CD14-positive monocyte (primary cell): ENCODE measurements at regions of chr20 and their contacts with region 1.

Region 1: DNA sequence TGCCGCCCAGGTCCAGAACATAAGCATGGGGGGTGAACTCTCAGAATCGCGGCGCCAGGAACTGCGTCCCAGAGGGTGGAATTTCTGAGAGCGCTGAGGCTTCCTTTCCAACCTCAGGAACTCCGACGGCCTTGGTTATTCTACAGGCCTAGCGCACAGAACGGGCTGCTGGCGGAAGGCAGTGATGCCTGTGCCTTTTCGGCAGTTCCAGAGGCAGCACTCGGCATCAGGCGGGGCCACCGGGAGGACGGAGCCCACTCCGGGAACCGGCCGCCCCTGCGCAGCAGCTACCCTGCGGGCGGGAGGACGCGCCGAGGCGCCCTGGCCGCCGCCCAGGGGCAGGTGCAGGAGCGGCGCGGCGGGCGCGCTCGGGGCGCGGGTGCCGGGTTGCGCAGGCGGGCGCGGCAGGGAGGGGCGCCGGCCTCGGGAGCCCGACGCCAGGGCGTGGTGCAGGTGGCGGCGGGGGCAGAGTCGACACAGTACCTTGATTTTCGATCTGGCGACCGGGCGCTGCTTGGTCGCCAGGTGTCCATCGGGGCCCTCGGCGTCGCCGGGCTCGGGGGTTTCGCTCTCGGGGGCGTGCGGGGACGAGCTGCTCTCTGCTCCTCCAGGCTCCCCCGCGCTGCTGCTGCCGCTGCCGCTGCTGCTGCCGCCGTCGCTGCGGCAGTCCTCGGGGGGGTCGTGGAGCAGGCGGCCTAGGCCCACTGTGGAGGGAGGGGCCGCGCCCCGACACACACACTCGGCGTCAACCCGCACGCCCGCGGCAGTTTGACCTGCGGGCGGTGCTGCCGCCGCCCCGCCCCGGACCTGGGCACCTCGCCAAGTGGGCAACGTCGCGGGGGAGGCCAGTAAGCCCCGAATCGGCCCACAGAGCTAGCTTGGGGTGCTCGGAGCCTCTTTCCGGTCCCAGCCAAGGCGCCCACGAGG is 1.3 kb downstream of the OVOL2 start:
- DNase-seq: no peak
- H3K4me3 ChIP-seq: peak overlapping the region; percentile 38 to 77 (median 50)
- H3K4me3 Mint-ChIP-seq: peak overlapping the region; percentile 79 to 88
- H3K27ac ChIP-seq: no peak overlapping the region
- H3K27ac Mint-ChIP-seq: peak overlapping the region in 1 of 7 donors; percentile 35
- H3K4me1 ChIP-seq: peaks cover 48 to 63% of the 10 kb centered on the region in 2 donors
- H3K4me1 Mint-ChIP-seq: peaks cover 48% of the 10 kb centered on the region
- H3K27me3 ChIP-seq: peaks cover 60 to 71% of the 10 kb centered on the region in 2 donors
- H3K27me3 Mint-ChIP-seq: peaks cover 64 to 75% (median 74%) of the 10 kb centered on the region in 3 donors
- CTCF ChIP-seq: no peak

Region 2: DNA sequence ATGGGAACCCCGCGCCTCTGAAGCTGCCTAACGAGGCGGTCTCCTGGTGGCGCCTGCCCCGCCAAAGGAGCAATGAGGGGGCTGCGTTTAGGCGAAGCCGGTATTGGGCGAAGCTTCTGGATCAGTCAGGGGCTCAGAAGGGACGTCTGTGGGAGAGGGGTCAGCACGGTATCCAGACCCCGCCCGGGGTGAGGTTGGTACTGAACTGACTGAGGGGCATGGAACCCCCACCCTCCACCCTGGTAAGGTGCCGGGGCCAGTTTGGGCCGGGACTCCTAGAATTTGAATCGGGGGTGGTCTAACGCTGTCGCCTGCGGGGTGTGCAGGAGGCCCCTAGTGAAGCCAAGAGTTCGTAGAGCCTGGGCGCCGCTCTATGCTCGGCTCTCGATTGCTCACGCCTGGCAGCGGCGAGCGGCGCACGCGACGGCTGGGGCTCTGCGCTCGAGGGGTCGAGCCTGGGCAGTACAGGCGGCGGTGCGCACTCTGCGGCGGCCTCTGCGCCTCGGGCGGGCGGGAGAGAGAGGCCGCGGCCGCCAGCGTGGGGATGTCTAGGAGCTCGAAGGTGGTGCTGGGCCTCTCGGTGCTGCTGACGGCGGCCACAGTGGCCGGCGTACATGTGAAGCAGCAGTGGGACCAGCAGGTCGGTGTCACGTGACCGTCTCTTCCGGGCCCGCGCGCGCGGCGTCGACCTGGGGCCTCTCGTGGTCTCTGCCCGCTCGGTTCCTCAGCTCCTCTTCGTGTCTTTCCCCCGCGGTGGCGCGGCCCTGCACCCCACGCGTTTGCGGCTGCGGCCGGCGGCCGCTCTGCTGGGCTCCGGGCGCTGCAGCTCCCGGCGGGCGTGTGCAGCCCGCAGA is 81.2 kb after region 1 on chr20 and contains the starts of genes KAT14 and PET117:
- intact Hi-C with region 1: loop called in 1 of 2 experiments (anchors 10 kb)
- DNase-seq: peak; percentile 80 to 89 (median 88)
- H3K4me3 ChIP-seq: peak within 1 kb of the TSS; percentile 48 to 99 (median 97)
- H3K4me3 Mint-ChIP-seq: peak within 1 kb of the TSS; percentile 94
- H3K27ac ChIP-seq: peak within 1 kb of the TSS; percentile 73 to 95
- H3K27ac Mint-ChIP-seq: peak within 1 kb of the TSS; percentile 78 to 93 (median 89)
- H3K4me1 ChIP-seq: peaks cover 16 to 25% of the 10 kb centered on the region in 2 donors
- H3K4me1 Mint-ChIP-seq: peaks cover 26% of the 10 kb centered on the region
- H3K27me3 ChIP-seq: no peaks in the 10 kb centered on the region
- H3K27me3 Mint-ChIP-seq: peaks cover 0 to 4% (median 3%) of the 10 kb centered on the region in 3 donors
- CTCF ChIP-seq: no peak
- polyA plus RNA-seq, gene KAT14: 3.4 to 6.0 (median 5.7) TPM
- polyA plus RNA-seq, gene PET117: 3.9 to 19.5 (median 16.6) TPM

Region 3: DNA sequence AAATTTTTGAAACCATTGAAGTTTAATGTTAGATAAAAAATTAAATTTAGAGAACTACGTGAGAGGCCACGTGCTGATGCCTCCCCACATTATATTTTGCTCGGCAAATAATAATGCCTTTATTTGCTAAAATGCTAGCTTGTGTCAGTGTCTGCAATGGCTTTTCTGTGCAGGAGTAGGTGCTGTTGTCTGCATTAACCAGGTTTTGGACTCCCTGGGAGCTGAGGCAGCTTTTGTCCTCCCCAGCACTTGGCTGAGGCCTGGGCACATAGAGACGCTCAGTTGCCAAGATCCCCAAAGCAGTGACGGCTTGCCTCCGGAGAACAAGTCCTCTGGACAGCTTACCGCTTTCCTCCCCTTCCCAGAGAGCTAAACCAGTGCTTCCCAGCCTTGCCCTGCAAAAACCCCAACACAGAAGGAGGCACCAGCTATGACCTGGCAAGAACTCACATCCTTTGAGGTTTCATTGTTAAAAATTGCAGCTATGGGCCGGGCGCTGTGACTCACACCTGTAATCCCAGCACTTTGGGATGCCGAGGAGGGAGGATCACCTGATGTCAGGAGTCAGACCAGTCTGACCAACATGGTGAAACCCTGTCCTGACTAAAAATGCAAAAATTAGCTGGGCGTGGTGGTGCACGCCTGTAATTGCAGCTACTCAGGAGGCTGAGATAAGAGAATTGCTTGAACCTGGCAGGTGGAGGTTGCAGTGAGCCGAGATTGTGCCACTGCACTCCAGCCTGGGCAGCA is 141.1 kb after region 1 on chr20:
- intact Hi-C with region 1: no loop called
- DNase-seq: no peak
- H3K4me3 ChIP-seq: no peak overlapping the region
- H3K4me3 Mint-ChIP-seq: no peak overlapping the region
- H3K27ac ChIP-seq: no peak overlapping the region
- H3K27ac Mint-ChIP-seq: peak overlapping the region in 1 of 7 donors; percentile 3
- H3K4me1 ChIP-seq: no peaks in the 10 kb centered on the region
- H3K4me1 Mint-ChIP-seq: no peaks in the 10 kb centered on the region
- H3K27me3 ChIP-seq: no peaks in the 10 kb centered on the region
- H3K27me3 Mint-ChIP-seq: peaks cover 0 to 2% (median 0%) of the 10 kb centered on the region in 3 donors
- CTCF ChIP-seq: no peak